ENCODE measurements at regions of chr14 and their contacts with region 1.

Region 1: DNA sequence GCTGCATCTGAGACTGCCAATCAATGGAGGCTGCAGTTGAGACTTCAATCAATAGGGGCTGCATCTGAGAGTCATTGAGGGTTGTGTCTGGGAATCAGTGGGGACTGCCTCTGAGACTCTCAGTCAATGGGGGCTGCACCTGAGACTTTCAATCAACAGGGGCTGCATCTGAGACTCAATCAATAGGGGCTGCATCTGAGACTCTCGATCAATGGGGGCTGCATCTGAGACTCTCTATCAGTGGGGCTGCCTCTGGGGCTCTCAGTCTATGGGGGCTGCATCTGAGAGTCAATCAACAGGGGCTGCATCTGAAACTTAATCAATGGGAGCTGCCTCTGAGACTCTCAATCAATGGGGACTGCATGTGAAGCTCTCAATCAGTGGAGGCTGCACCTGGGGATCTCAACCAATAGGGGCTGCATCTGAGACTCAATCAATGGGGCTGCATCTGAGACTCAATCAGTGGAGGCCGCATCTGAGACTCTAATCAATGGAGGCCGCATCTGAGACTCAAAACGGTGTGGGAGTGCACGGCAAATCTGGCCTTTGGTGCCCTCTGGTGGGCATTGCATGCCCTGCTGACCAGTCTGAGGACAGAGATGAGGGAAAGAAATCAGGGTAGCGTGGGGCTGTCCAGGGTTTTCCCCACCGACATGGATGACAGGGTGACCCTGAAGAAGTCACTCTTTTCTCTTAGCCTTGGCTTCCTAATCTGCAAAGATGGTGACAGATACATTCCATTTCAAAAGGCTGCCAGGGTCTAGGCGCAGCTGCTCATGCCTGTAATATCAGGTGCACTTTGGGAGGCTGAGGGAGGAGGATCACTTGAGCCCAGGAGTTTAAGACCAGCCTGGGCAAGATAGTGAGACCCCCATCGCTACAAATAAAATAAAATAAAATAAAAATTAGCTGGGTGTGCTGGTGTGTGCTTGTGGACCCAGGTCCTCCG is 41.3 kb upstream of the EIF5 start:
- H3K4me3 ChIP-seq: no peak overlapping the region
- H3K27ac ChIP-seq: no peak overlapping the region
- H3K4me1 ChIP-seq: no peaks in the 10 kb centered on the region
- CTCF ChIP-seq: peak; percentile 89

Region 2: GRCh38 chr14:103281496-103282231 is 11.0 kb before region 1 on chr14:
- CTCF ChIA-PET with region 1: interaction called, 7 read pairs
- POLR2A ChIA-PET with region 1: interaction called, 10 read pairs
- H3K4me3 ChIP-seq: no peak overlapping the region
- H3K27ac ChIP-seq: no peak overlapping the region
- H3K4me1 ChIP-seq: no peaks in the 10 kb centered on the region
- CTCF ChIP-seq: 0 out of 2 replicates have a peak, but pooled peaks have one; percentile 38

Measured in HEK293 (cell line).